ENCODE measurements at regions of chr4 and their contacts with region 1.

Region 1: DNA sequence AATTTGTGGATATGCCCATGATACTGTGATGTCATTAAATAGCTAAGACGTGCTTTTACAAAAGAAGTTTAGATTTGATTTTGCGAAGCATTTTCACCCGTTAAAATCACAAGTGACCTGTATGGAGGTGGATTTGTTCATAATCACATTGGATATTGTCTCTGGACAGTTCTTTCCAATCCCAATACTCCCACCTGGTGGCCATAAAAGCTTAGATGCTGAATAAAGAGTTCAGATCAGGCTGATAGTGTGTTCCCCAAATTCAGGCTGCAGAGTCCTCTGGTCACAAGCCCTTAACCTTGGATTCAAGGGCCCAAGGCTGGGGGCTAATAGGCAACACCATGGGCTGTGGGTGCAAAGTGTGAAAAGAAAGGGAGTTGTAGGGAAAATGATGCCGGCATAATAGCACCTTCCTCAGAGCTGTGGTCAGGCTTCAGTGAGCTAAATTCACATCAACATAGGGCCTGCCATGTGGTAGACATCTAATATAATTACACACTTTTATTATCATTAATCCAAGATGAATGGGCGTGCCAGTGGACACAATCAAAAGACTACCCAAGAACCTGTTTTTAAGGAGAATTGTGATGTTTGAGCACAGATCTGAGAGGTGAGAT is 28.1 kb downstream of the SMIM43 start:
- DNase-seq: peak; percentile 70
- ATAC-seq: peak; percentile 70
- H3K4me3 ChIP-seq: no peak overlapping the region
- H3K27ac ChIP-seq: no peak overlapping the region
- H3K4me1 ChIP-seq: peaks cover 17% of the 10 kb centered on the region
- H3K27me3 ChIP-seq: no peaks in the 10 kb centered on the region
- CTCF ChIP-seq: peak; percentile 77
- POLR2A ChIP-seq: no peak
- RAD21 ChIP-seq: peak; percentile 87

Region 2: DNA sequence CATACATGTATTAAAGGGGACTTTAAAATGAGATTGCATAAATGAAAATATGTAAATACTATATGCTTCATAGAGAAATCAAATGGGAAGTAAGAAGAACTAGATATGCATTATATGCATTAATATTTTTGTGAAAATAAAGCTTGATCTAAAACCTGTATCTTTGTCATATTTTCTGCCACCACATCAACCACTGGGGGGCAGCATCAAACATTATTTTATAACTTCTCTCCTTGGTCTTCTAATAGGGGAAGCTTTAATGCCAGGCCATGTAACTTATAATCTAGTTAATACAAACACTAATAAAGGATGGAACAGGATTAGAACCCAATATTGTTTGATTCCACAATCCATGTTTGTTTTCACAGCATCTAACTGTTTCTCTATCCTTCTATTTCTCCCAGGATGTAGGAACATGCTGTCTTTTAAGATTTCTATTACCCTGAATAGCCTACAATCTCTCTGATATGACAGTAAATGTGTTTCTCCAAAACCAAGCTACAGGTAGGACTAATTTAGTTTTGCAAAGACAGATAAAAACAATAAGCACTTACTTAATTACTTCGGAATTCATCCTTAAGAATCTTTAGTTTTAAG is 366.0 kb before region 1 on chr4:
- CTCF ChIA-PET with region 1: interaction called, 9 read pairs
- POLR2A ChIA-PET with region 1: no interaction called
- dilution Hi-C with region 1: no loop called
- in situ Hi-C with region 1: loop called (anchors 5 kb)
- intact Hi-C with region 1: loop called (anchors 1 kb)
- DNase-seq: peak; percentile 33
- ATAC-seq: peak; percentile 84
- H3K4me3 ChIP-seq: no peak overlapping the region
- H3K27ac ChIP-seq: no peak overlapping the region
- H3K4me1 ChIP-seq: no peaks in the 10 kb centered on the region
- H3K27me3 ChIP-seq: no peaks in the 10 kb centered on the region; the same call in 1 of the 2 replicates
- CTCF ChIP-seq: peak; percentile 64
- POLR2A ChIP-seq: no peak
- RAD21 ChIP-seq: peak; percentile 50

Region 3: GRCh38 chr4:121462660-121463261 is 274.1 kb before region 1 on chr4:
- CTCF ChIA-PET with region 1: interaction called, 5 read pairs
- POLR2A ChIA-PET with region 1: no interaction called
- dilution Hi-C with region 1: no loop called
- in situ Hi-C with region 1: no loop called
- intact Hi-C with region 1: loop called (anchors 2 kb)
- DNase-seq: peak; percentile 61
- ATAC-seq: peak; percentile 70
- H3K4me3 ChIP-seq: no peak overlapping the region
- H3K27ac ChIP-seq: no peak overlapping the region
- H3K4me1 ChIP-seq: no peaks in the 10 kb centered on the region
- H3K27me3 ChIP-seq: peaks cover 2% of the 10 kb centered on the region
- CTCF ChIP-seq: peak; percentile 65
- POLR2A ChIP-seq: no peak
- RAD21 ChIP-seq: peak; percentile 59

Region 4: DNA sequence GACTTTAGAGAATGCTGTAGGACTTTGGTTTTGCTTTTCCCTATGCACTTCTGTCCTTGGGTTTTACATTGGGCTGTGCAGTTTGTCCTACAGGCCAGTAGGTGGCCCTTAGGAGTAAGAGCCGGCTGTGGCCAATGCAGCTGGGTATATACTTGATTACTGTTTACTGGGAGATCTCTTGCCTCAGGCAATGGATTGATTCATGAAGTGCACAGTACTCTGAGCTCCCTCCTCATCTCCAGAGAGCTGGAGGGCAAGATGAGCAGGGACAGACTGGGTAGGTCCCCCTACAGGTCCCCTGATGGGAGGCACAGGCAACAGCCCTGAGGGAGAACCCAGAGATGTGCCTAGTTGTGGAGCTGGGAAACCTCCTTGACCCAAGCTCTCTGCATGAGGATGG is 252.2 kb before region 1 on chr4:
- CTCF ChIA-PET with region 1: interaction called, 5 read pairs
- POLR2A ChIA-PET with region 1: no interaction called
- dilution Hi-C with region 1: no loop called
- in situ Hi-C with region 1: loop called (anchors 5 kb)
- intact Hi-C with region 1: loop called (anchors 1 kb)
- DNase-seq: peak; percentile 66
- ATAC-seq: peak; percentile 100
- H3K4me3 ChIP-seq: no peak overlapping the region
- H3K27ac ChIP-seq: no peak overlapping the region
- H3K4me1 ChIP-seq: no peaks in the 10 kb centered on the region
- H3K27me3 ChIP-seq: peaks cover 2% of the 10 kb centered on the region; the same call in 1 of the 2 replicates
- CTCF ChIP-seq: peak; percentile 79
- POLR2A ChIP-seq: no peak
- RAD21 ChIP-seq: peak; percentile 75

Region 5: GRCh38 chr4:121674696-121675095 is 62.1 kb before region 1 on chr4:
- CTCF ChIA-PET with region 1: interaction called, 3 read pairs
- POLR2A ChIA-PET with region 1: no interaction called
- dilution Hi-C with region 1: no loop called
- in situ Hi-C with region 1: loop called (anchors 5 kb)
- intact Hi-C with region 1: no loop called
- DNase-seq: no peak
- ATAC-seq: no peak
- H3K4me3 ChIP-seq: no peak overlapping the region
- H3K27ac ChIP-seq: no peak overlapping the region
- H3K4me1 ChIP-seq: peaks cover 20% of the 10 kb centered on the region
- H3K27me3 ChIP-seq: no peaks in the 10 kb centered on the region
- CTCF ChIP-seq: no peak
- POLR2A ChIP-seq: no peak
- RAD21 ChIP-seq: no peak